Posterior cingulate gyrus (tissue), 11 donors: ENCODE measurements at regions of chr18 and their contacts with region 1.

Region 1: GRCh38 chr18:67199993-67200617 is 316.4 kb downstream of the DSEL start:
- DNase-seq: no peak

Region 2: GRCh38 chr18:66752733-66753132 is 447.4 kb before region 1 on chr18:
- intact Hi-C with region 1: no loop called
- DNase-seq: no peak

Region 3: DNA sequence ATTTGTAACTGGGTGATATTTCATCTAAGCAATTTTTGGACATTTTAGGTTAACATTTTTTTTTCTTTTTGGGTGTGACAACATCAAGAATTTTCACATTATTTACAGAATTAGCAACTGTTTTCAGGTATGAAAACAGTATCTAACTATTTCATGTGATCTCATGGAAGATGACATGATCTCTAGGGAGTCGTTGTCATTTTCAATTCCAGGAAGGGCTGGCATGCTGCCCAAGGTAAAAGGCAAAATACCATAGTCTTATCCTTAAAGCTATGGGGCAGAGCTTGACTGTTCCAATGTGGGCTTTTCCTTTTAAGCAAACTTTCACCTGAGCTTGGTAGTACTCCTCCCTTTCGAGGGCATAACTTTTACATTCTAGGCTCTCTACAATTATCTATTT is 127.3 kb before region 1 on chr18:
- intact Hi-C with region 1: no loop called
- DNase-seq: no peak

Region 4: GRCh38 chr18:67104700-67105284 is 95.3 kb before region 1 on chr18:
- intact Hi-C with region 1: loop called (anchors 1 kb)
- DNase-seq: peak in 8 of 10 donors; percentile 28 to 89 (median 66)